ENCODE measurements at regions of chr18 and their contacts with region 1.

Region 1: DNA sequence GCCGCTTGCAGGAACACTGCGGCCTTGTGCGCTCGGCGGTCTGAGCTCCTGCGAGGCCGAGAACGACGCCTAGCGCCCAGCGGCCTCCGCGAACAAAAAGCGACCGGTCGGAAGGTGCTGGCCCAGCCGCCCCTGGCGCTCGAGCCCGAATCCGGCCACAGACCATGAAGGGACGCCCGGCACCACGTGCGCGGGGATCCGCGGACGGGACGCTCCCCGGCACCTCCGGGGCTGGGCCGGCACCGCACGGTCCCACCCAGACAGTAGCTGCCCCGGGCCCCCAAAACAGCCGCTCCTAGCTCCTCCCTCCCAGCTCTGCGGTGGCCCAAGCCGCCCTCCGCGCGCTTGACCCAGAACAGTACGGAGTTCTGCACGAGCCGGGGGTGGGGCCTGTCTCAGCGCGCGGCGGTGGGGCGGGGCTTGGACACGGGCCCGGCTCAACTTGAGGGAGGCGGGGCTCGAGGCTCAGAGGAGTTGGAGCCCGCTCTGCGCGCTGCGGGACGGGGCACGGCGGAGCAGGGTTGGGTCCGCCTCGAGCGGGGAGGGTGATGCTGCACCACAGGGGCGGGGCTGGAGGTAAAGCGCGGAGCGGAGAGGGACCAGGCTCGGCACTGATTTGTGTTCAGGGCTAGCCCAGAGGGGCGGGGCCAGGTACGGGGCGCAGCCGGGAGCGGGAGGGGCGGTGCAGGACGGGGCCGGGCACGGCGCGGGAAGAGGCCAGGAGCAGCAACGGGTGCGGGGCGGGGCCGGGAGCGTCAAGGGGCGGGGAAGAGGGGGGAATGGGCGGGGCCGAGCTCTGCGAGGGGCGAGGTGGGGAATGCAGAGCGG is 538 bp upstream of the IMPA2 start:
- DNase-seq: peak; percentile 95
- H3K4me3 ChIP-seq: peak overlapping the region; percentile 68
- H3K27ac ChIP-seq: peak overlapping the region; percentile 87
- H3K27me3 ChIP-seq: no peaks in the 10 kb centered on the region
- CTCF ChIP-seq: peak; percentile 29; the same call in 1 of the 2 replicates

Region 2: DNA sequence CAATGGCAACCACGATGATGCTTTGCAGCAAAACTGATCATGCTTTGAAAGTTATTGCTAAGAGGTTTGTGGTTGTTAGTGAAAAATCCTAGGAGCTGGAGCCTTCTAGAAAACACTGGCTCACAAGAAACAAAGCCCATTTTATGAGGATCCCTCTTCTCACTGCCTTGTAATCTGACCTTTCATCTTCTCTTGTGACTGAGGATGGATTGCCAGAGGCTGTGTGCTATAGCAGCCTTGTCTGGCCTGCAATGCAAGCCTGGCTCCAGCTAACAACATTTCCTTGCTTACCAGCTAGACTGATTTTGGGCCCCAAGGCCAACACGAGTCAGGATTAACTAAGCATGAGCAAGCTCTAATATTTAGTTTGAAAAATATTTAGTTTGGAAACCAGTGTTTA is 844.5 kb before region 1 on chr18:
- CTCF ChIA-PET with region 1: no interaction called
- POLR2A ChIA-PET with region 1: no interaction called
- DNase-seq: no peak
- H3K4me3 ChIP-seq: no peak overlapping the region
- H3K27ac ChIP-seq: no peak overlapping the region
- H3K27me3 ChIP-seq: no peaks in the 10 kb centered on the region
- CTCF ChIP-seq: no peak

Region 3: GRCh38 chr18:11947214-11948191 is 33.3 kb before region 1 on chr18:
- CTCF ChIA-PET with region 1: interaction called, 12 read pairs
- POLR2A ChIA-PET with region 1: interaction called, 13 read pairs
- DNase-seq: peak; percentile 87
- H3K4me3 ChIP-seq: peak overlapping the region; percentile 37
- H3K27ac ChIP-seq: peak overlapping the region; percentile 89
- H3K27me3 ChIP-seq: no peaks in the 10 kb centered on the region
- CTCF ChIP-seq: no peak

Region 4: DNA sequence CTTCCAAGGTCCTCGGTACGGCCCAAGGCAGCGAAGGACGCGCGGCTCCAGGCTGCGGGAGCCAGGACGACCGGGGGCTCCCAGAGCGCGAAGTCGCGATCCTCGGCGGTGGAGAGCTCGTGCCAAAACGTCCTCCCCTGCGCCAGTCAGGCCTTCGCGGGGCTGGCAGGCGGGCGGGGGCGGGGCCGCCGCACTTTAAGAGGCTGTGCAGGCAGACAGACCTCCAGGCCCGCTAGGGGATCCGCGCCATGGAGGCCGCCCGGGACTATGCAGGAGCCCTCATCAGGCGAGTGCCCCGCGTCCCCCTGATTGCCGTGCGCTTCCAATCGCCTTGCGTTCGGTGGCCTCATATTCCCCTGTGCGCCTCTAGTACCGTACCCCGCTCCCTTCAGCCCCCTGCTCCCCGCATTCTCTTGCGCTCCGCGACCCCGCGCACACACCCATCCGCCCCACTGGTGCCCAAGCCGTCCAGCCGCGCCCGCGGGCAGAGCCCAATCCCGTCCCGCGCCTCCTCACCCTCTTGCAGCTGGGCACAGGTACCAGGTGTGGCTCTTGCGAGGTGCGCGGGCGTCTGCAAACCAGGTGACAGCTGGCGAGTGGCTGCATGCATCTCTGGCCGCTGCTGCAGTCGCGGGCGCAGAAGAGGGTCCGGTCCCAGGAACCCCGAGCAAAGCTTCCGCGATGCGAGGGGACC is 273.5 kb after region 1 on chr18 and contains the start of gene CIDEA:
- CTCF ChIA-PET with region 1: no interaction called
- POLR2A ChIA-PET with region 1: no interaction called
- DNase-seq: no peak
- H3K4me3 ChIP-seq: peak within 1 kb of the TSS; percentile 45
- H3K27ac ChIP-seq: no peak within 1 kb of the TSS
- H3K27me3 ChIP-seq: peaks cover 42% of the 10 kb centered on the region
- CTCF ChIP-seq: no peak
- polyA plus RNA-seq, gene CIDEA: 0.17 TPM in 1 of 2 replicates, not detected in the other